Activated T-helper 1 cell treated with anti-CD3 and anti-CD28 coated beads, Interleukin-12 subunit alpha, Interleukin-12 subunit beta, Interleukin-2, Interleukin-4 antibody, amounts not matched to agents 30 ng/mL and 10 ng/mL and 1 ng/mL, durations not matched to agents 14 hours and 24 hours and 36 hours (primary cell): ENCODE measurements at regions of chr9 and their contacts with region 1.

Region 1: DNA sequence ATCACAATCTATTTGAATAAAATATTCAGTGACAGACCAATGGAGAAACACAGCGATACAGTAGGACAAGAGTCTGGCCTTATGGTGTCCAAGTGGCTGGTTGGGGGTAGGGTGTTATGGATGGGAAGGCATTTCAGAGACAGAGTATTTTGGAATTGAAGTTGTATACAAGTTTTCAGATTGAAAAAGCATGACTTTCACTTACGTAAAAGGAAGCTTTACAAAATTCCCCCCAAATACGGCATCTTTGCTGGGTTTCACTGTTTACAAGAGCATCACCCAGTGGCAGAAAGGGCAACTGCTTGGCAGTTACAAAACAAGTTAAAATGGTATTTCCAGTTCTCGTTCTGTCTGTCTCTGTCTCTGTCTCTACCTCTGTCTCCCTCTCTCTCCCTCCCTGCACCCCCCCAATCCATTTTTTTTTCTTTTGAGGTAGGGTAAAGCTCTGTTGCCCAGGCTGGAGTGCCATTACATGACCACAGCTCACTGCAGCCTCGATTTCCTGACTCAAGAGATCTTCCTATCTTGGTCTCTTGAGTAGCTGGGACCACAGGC is 86.2 kb downstream of the PTPN3 start:
- DNase-seq: no peak
- H3K4me3 Mint-ChIP-seq: peak overlapping the region; percentile 32
- H3K27ac Mint-ChIP-seq: peak overlapping the region; percentile 92
- H3K4me1 Mint-ChIP-seq: peaks cover 73% of the 10 kb centered on the region
- H3K27me3 Mint-ChIP-seq: no peaks in the 10 kb centered on the region

Region 2: DNA sequence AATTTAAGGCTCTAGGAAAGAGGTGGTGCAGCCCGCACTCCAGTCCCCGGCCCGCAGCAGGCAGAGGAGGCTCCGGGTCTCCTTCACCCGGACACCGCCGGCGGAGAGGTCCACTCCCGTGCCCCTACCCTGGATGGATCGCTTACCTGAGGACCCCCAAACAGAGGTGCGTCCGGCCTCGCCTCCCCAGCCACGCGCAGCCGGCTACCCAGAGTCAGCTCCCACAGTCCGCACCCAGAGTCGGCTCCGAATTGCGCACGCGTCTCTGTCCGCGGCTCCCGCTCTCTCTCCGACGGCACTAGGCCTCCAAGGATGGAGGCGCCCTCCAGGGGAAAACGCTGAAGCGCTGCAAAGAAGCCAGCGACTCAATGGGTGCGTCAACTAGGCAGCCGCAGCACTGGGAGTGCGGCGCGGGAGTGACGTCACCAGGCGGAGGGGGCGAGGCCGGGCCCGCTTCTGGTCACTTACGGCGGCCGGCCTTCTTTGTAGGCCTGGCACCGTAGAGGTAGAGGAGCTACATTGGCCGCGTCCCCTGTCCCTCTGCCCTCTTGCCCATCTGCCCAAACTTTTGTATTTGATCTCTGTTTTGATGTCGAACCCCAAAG is 478.1 kb before region 1 on chr9 and contains the start of gene ELP1:
- intact Hi-C with region 1: loop called (anchors 5 kb)
- DNase-seq: peak; percentile 90
- H3K4me3 Mint-ChIP-seq: peak within 1 kb of the TSS; percentile 95
- H3K27ac Mint-ChIP-seq: peak within 1 kb of the TSS; percentile 95
- H3K4me1 Mint-ChIP-seq: peaks cover 23% of the 10 kb centered on the region
- H3K27me3 Mint-ChIP-seq: no peaks in the 10 kb centered on the region
- total RNA-seq, gene ELP1: 31.6 and 35.2 TPM in 2 replicates

Region 3: DNA sequence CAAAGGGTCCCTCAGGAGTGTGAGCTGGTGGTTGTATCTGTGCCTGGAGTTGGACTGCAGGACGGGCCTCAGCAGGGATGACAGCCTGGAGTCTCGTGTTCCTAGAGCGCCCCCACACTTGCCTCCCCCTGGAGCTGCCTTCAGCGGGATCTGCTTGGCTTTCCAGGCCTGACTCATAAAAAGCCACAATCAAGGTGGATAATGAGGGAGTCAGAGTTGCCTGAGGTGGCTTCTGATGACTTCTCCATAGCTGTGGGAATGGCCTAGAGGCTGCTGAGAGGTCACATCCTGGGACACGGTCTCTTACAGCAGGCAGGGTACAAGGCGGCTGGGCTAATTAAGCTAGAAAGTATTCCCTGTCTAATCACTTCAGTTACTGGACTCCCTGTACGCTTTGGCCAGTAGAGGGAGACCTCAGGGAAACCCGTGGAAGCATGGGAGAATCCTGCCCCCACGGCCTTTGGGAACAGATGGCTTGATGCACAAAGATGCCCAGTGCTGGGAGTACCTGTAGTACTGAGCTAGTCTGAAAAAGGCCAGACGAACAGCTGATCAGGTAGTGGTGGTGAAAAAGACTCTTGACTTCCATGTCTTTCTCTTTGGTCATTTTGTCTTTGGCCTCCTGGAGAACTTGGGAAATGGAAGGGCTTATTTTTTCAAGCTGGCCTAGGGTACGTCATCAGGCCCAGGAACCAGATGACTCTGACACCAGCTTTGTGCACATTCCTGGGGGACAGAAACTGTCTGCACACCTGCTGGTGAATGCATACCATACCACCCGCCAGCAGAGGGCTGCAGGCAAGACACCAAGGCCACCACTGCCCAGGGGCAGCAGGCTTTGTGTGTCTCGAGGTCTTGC is 228.7 kb before region 1 on chr9:
- intact Hi-C with region 1: loop called (anchors 2 kb)
- DNase-seq: no peak
- H3K4me3 Mint-ChIP-seq: no peak overlapping the region
- H3K27ac Mint-ChIP-seq: no peak overlapping the region
- H3K4me1 Mint-ChIP-seq: peaks cover 7% of the 10 kb centered on the region
- H3K27me3 Mint-ChIP-seq: peaks cover 42% of the 10 kb centered on the region

Region 4: GRCh38 chr9:109320742-109321448 is 91.0 kb before region 1 on chr9 and contains the start of gene EPB41L4B:
- intact Hi-C with region 1: loop called (anchors 2 kb)
- DNase-seq: peak; percentile 85
- H3K4me3 Mint-ChIP-seq: peak within 1 kb of the TSS; percentile 84
- H3K27ac Mint-ChIP-seq: peak within 1 kb of the TSS; percentile 72
- H3K4me1 Mint-ChIP-seq: peaks cover 23% of the 10 kb centered on the region
- H3K27me3 Mint-ChIP-seq: peaks cover 69% of the 10 kb centered on the region
- total RNA-seq, gene EPB41L4B: 2.0 and 2.2 TPM in 2 replicates

Region 5: DNA sequence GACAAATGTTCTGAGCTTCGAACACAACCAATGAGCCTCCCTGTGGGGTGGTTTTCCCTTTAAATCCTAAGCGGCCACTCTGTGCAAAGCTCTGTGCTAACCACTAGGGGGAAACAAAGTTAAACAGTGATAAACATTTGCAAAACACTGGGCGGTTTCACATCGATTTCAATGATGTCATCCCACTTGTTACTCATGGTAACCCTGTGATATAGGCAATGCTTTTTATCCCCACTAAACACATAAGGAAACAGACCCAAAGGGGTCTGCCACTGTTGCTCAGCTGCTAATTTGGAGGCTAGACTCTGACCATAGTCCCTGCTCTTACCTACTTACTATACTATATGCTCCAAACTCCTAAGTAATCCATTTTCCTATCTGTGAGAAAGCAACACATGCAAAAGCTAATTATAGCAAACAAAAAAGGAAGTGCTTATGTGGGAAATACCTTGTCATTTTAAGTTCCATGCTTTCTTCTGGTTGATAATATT is 29.0 kb after region 1 on chr9:
- intact Hi-C with region 1: loop called (anchors 1 kb)
- DNase-seq: peak; percentile 71
- H3K4me3 Mint-ChIP-seq: no peak overlapping the region
- H3K27ac Mint-ChIP-seq: peak overlapping the region; percentile 85
- H3K4me1 Mint-ChIP-seq: peaks cover 34% of the 10 kb centered on the region
- H3K27me3 Mint-ChIP-seq: peaks cover 9% of the 10 kb centered on the region